ENCODE measurements at regions of chr3 and their contacts with region 1.

Region 1: DNA sequence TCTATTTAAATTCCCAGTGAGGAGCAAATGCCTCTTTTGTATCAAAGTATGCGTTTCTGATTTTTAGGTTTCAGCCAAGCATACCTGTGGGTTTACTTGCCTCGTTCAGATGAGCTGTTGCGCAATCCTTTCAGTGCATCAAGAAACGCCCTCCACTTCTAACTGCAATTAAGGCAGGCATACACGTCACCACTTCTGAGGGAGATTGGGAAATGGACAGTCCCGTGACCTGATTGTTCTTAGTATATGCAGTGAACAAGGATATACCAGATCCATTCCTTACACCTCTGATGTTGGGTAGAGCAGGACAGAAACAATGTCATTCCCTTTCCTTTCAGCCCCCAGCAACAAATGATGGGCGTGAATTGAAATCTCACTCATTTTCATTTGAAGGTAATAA is 219.0 kb downstream of the ITPR1 start:
- DNase-seq: no peak
- ATAC-seq: no peak
- H3K4me3 Mint-ChIP-seq: no peak overlapping the region
- H3K27ac Mint-ChIP-seq: no peak overlapping the region
- H3K4me1 Mint-ChIP-seq: peaks cover 2% of the 10 kb centered on the region
- H3K27me3 Mint-ChIP-seq: no peaks in the 10 kb centered on the region
- CTCF ChIP-seq: no peak

Region 2: DNA sequence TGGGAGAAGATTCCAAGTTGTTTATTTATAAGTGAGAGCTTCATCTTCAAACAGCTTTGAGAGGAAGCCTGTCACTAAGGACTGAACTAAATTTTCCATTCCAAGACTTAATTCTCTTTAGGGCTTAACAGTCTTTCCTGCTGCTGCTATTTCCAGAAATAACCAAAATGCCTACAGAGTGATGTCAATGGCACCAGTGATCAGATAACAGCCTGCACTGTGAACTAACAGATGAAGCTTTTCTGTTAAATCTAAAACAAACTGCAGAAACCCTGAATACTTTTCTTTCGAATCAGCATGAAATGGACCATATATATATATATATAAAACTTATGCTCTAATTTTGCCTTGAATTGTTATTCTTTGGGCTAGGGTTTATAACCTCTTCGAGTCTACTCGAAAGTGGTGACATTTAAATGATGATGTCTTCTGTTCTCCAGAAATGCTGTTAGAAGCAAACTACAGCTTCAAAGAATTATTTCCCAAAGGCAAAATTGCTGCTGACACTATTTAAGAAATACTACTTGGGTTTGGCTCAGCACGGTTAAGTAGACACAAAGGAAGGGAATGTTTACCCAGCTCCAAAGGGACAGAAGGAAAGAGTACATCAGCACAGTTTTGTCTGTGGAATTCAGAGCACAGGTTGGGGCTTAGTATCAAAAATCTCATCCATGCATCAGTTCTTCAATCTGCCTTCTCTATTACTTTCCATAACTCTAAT is 1151.4 kb before region 1 on chr3:
- CTCF ChIA-PET with region 1: no interaction called
- POLR2A ChIA-PET with region 1: no interaction called
- intact Hi-C with region 1: no loop called
- DNase-seq: no peak
- ATAC-seq: no peak
- H3K4me3 Mint-ChIP-seq: no peak overlapping the region
- H3K27ac Mint-ChIP-seq: no peak overlapping the region
- H3K4me1 Mint-ChIP-seq: no peaks in the 10 kb centered on the region
- H3K27me3 Mint-ChIP-seq: no peaks in the 10 kb centered on the region
- CTCF ChIP-seq: no peak

Region 3: DNA sequence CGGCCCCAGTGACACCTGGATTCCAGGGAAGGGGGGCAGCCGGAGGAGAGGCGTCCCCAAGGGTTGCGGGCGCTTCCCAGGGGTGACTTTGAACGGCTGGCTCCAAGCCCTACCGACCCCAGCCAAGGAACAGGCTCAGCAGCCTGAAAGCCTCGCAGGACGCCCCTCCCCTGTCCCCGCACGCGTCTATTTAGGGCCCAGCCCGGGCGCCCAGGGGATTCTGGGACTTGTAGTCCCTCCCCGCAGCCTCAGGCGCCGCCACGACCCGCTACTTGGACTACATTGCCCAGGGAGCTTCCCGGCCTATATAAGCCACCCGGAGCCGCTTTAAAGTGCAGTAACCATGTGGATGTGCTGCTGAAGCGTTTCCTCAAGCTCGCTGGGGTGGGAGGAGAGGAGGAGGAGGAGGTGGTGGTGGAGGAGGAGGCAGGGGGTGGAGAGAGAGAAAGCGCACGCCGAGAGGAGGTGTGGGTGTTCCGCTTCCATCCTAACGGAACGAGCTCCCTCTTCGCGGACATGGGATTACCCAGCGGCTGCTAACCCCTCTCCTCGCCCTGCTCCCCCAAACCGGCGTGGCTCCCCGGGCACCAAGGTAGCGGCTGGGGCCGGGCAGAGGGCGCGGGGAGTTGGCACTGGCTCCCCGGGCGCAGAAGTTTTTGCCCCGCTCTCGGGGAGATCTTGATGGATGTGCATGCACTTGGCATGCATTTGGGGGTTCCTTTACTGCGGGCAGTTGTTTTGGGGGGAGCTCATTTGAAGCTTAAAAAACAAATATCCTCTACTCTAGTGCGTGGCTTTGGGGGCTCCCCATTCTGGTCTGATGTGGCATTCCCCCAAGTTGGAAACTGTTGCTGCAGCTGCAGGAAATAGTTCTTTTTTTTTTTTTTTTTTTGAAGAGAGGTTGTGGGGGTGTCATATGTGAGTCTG is 218.9 kb before region 1 on chr3 and contains the start of gene ITPR1:
- CTCF ChIA-PET with region 1: no interaction called
- POLR2A ChIA-PET with region 1: no interaction called
- intact Hi-C with region 1: no loop called
- DNase-seq: peak; percentile 92
- ATAC-seq: peak; percentile 88
- H3K4me3 Mint-ChIP-seq: peak within 1 kb of the TSS; percentile 93
- H3K27ac Mint-ChIP-seq: peak within 1 kb of the TSS; percentile 92
- H3K4me1 Mint-ChIP-seq: peaks cover 49% of the 10 kb centered on the region
- H3K27me3 Mint-ChIP-seq: no peaks in the 10 kb centered on the region
- CTCF ChIP-seq: no peak
- total RNA-seq, gene ITPR1: 116 and 143 TPM in 2 replicates

Region 4: DNA sequence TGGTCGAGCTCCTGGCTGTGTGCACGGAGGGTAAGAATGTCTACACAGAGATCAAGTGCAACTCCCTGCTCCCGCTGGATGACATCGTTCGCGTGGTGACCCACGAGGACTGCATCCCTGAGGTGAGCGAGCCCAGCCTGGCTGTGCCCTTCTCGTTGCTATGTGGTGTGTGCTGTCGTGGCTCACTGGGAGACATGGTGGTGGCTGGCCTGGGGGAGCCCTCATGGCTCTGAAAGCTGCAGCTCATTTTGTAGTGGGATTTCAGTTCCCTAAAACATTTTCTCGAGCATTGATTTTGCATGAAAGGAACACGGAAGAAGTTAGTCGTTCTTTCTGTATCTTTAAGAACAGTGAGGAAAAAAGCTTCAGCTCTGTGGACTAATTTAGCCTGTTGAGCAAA is 18.5 kb before region 1 on chr3:
- CTCF ChIA-PET with region 1: interaction called, 11 read pairs
- POLR2A ChIA-PET with region 1: no interaction called
- intact Hi-C with region 1: no loop called
- DNase-seq: no peak
- ATAC-seq: peak; percentile 75
- H3K4me3 Mint-ChIP-seq: no peak overlapping the region
- H3K27ac Mint-ChIP-seq: peak overlapping the region; percentile 59
- H3K4me1 Mint-ChIP-seq: peaks cover 7% of the 10 kb centered on the region
- H3K27me3 Mint-ChIP-seq: no peaks in the 10 kb centered on the region
- CTCF ChIP-seq: no peak

Region 5: GRCh38 chr3:5026331-5027218 is 314.4 kb after region 1 on chr3:
- CTCF ChIA-PET with region 1: interaction called, 18 read pairs
- POLR2A ChIA-PET with region 1: no interaction called
- intact Hi-C with region 1: loop called (anchors 1 kb)
- DNase-seq: peak; percentile 57
- ATAC-seq: peak; percentile 72
- H3K4me3 Mint-ChIP-seq: peak overlapping the region; percentile 84
- H3K27ac Mint-ChIP-seq: peak overlapping the region; percentile 78
- H3K4me1 Mint-ChIP-seq: peaks cover 39% of the 10 kb centered on the region
- H3K27me3 Mint-ChIP-seq: no peaks in the 10 kb centered on the region
- CTCF ChIP-seq: no peak

Region 6: DNA sequence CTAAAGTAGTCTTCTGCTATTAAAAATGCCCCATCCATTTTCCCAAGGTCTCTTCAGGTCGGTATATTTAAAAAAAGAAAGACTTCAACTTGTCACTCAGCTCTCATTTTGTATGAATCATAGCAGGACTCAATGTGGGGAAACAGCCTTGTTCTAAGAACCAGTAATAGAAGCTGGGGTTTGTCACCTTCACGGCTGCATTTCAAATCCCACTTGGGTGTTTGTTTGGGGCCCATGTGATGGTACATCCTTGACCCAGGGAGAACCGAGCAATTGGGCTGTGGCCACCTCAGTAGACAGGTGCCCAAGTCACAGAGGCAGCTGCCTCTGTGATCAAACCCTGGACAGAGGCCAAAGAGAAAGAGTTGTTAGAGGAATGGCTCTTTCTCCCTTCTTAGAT is 339.6 kb after region 1 on chr3:
- CTCF ChIA-PET with region 1: interaction called, 219 read pairs
- POLR2A ChIA-PET with region 1: interaction called, 7 read pairs
- intact Hi-C with region 1: no loop called
- DNase-seq: no peak
- ATAC-seq: no peak
- H3K4me3 Mint-ChIP-seq: no peak overlapping the region
- H3K27ac Mint-ChIP-seq: no peak overlapping the region
- H3K4me1 Mint-ChIP-seq: peaks cover 37% of the 10 kb centered on the region
- H3K27me3 Mint-ChIP-seq: no peaks in the 10 kb centered on the region
- CTCF ChIP-seq: no peak

Region 7: GRCh38 chr3:5187156-5187919 is 475.2 kb after region 1 on chr3 and contains the start of gene EDEM1:
- CTCF ChIA-PET with region 1: no interaction called
- POLR2A ChIA-PET with region 1: no interaction called
- intact Hi-C with region 1: loop called (anchors 10 kb)
- DNase-seq: peak; percentile 100
- ATAC-seq: peak; percentile 88
- H3K4me3 Mint-ChIP-seq: peak within 1 kb of the TSS; percentile 98
- H3K27ac Mint-ChIP-seq: peak within 1 kb of the TSS; percentile 99
- H3K4me1 Mint-ChIP-seq: peaks cover 73% of the 10 kb centered on the region
- H3K27me3 Mint-ChIP-seq: no peaks in the 10 kb centered on the region
- CTCF ChIP-seq: no peak
- total RNA-seq, gene EDEM1: 171 and 185 TPM in 2 replicates

Measured in activated B cell treated with CpG ODN at 0.5 μM for 24 hours (primary cell).